Breast epithelium (tissue), 4 donors: ENCODE measurements at regions of chr21 and their contacts with region 1.

Region 1: GRCh38 chr21:30882866-30883597 is 1.7 kb upstream of the KRTAP11-1 start:
- DNase-seq: no peak
- H3K4me3 ChIP-seq: no peak overlapping the region
- H3K27ac ChIP-seq: no peak overlapping the region
- H3K4me1 ChIP-seq: no peaks in the 10 kb centered on the region
- H3K27me3 ChIP-seq: no peaks in the 10 kb centered on the region
- CTCF ChIP-seq: no peak
- POLR2A ChIP-seq: no peak

Region 2: DNA sequence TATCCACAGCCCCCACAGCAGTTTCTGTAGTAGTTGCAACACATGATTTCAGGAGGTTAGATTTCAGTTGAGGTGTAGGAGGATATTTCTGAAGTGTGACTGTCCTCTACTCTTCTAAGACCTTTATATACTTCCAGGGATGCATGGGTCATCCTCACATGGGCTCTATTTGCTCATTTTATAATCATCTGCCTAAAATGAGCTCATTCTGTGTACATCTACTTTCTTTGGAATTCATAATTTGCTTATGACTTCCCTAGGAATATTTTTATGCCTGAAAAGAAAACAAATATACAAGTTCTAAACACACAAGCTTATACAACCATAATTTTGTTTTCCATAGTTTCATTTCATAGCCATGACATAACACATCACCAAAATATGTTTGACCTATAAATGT is 135.9 kb before region 1 on chr21 and contains the start of gene KRTAP21-2:
- intact Hi-C with region 1: loop called (anchors 5 kb)
- DNase-seq: no peak
- H3K4me3 ChIP-seq: no peak within 1 kb of the TSS
- H3K27ac ChIP-seq: no peak within 1 kb of the TSS
- H3K4me1 ChIP-seq: no peaks in the 10 kb centered on the region
- H3K27me3 ChIP-seq: no peaks in the 10 kb centered on the region
- CTCF ChIP-seq: no peak
- POLR2A ChIP-seq: no peak
- total RNA-seq, gene KRTAP21-2: not detected

Region 3: DNA sequence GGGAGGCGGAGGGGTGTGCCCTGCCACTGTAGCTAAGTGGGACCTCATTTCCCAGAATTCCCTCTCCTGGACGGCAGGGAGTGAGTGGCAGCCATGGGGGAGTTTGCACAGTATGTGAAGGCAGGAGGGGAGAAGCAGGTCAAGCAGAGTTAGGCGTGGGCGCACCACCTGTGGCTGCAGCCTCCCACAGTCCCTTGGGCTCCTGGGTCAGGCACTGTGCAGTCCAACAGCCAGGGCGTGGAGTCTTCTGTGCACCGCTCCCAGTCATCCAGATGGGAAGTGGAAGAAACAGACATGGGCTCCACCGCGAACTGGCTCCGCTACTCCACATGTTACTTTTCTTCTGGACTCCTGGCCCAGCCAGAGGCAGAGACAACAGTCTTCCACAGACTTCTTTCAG is 546.5 kb after region 1 on chr21:
- intact Hi-C with region 1: no loop called
- DNase-seq: no peak
- H3K4me3 ChIP-seq: peak overlapping the region in 1 of 3 donors; percentile 15
- H3K27ac ChIP-seq: no peak overlapping the region
- H3K4me1 ChIP-seq: no peaks in the 10 kb centered on the region
- H3K27me3 ChIP-seq: no peaks in the 10 kb centered on the region
- CTCF ChIP-seq: no peak
- POLR2A ChIP-seq: no peak